Activated T-helper 1 cell treated with anti-CD3 and anti-CD28 coated beads, Interleukin-12 subunit alpha, Interleukin-12 subunit beta, Interleukin-2, Interleukin-4 antibody, amounts not matched to agents 30 ng/mL and 10 ng/mL and 1 ng/mL, durations not matched to agents 14 hours and 24 hours and 36 hours (primary cell): ENCODE measurements at regions of chr9 and their contacts with region 1.

Region 1: GRCh38 chr9:83920927-83921707 is at the start of gene KIF27:
- DNase-seq: peak; percentile 98
- H3K4me3 Mint-ChIP-seq: peak within 1 kb of the TSS; percentile 85
- H3K27ac Mint-ChIP-seq: peak within 1 kb of the TSS; percentile 91
- H3K4me1 Mint-ChIP-seq: peaks cover 17% of the 10 kb centered on the region
- H3K27me3 Mint-ChIP-seq: no peaks in the 10 kb centered on the region
- total RNA-seq, gene KIF27: 2.9 TPM in 2 replicates

Region 2: DNA sequence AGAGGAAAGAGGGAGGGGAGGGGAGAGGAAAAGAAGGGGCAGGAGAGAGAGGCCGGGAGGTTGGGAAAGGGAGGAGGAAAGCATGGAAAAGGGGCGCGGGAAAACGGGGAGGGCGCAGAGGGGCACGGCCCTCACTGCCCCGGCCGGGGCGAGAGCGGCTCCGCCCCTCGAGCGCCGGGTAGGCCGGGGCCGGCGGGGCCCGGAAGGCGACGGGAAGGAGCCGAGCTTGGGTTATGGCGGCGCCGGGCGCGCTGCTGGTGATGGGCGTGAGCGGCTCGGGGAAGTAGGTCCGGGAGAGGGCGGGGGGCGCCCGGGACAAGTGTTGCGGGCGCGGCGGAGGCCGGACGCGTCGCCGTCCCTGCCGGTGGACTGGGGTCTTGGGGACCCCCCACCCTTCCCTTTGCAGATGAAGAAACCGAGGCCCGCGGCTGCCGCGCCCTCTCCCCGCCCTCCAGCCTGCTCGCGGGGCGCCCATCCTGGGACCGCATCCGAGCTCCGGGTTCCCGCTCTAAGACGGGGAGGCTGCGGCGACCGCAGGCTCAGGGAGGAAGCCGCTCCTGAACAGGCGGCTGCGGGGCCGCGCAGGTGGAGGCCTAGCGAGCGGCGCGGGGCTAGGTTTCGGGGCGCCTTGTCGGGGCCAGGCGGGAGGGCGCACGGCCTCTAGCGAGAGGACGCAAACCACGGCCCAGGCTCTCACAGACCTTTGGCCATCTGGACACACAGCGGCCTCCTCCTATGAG is 298.0 kb before region 1 on chr9 and contains the start of gene IDNK:
- intact Hi-C with region 1: loop called (anchors 1 kb)
- DNase-seq: peak; percentile 60
- H3K4me3 Mint-ChIP-seq: peak within 1 kb of the TSS; percentile 91
- H3K27ac Mint-ChIP-seq: peak within 1 kb of the TSS; percentile 97
- H3K4me1 Mint-ChIP-seq: peaks cover 44% of the 10 kb centered on the region
- H3K27me3 Mint-ChIP-seq: peaks cover 10% of the 10 kb centered on the region
- total RNA-seq, gene IDNK: 4.5 and 6.3 TPM in 2 replicates

Region 3: GRCh38 chr9:83707768-83708514 is 213.2 kb before region 1 on chr9 and contains the start of gene UBQLN1:
- intact Hi-C with region 1: loop called (anchors 1 kb)
- DNase-seq: peak; percentile 89
- H3K4me3 Mint-ChIP-seq: peak within 1 kb of the TSS; percentile 87
- H3K27ac Mint-ChIP-seq: peak within 1 kb of the TSS; percentile 96
- H3K4me1 Mint-ChIP-seq: peaks cover 36% of the 10 kb centered on the region
- H3K27me3 Mint-ChIP-seq: no peaks in the 10 kb centered on the region
- total RNA-seq, gene UBQLN1: 142 and 143 TPM in 2 replicates

Region 4: GRCh38 chr9:83937911-83938323 is 16.8 kb after region 1 on chr9:
- intact Hi-C with region 1: loop called (anchors 1 kb)
- DNase-seq: peak; percentile 20
- H3K4me3 Mint-ChIP-seq: no peak overlapping the region
- H3K27ac Mint-ChIP-seq: no peak overlapping the region
- H3K4me1 Mint-ChIP-seq: peaks cover 5% of the 10 kb centered on the region
- H3K27me3 Mint-ChIP-seq: peaks cover 2% of the 10 kb centered on the region

Region 5: DNA sequence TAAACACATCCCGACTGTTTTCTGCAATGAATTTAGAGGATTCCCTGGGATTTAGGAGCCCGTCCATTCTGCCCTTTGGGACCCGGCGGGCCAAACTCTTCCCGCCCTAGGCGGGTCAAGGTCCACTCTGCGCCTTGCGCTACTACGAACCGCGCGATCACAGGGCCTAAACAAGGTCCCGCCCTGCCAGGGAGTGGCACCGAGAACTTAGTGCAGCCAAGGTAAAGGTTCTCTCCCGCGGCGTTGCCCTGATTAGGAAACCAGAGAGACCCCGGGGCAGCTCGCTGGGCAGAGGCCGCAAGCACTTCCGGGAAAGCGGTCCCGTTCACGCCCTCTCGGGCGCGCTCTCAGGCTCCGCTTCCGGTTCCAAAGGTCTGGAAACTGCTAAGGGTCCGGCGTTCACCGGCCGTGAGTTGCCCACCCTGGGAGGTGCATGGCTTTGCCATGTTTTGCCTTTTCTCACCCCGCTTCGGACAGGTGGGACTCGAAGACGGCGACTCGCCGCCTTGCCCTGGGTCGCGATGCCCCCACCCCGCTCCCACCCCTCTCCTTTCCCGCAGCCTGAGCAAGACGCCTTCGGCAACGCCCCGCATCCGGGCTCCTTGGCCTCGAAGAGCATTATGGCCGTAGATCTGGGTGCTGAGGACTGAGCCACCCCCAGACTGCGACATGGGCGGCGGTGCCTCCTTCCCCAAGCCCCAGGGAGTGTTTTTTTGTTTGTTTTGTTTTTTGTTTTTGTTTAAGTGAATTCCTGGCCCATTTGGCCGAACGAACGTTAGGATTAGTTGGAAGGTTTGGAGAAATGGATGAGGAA is 35.5 kb after region 1 on chr9:
- intact Hi-C with region 1: loop called (anchors 1 kb)
- DNase-seq: peak; percentile 64
- H3K4me3 Mint-ChIP-seq: peak overlapping the region; percentile 92
- H3K27ac Mint-ChIP-seq: peak overlapping the region; percentile 94
- H3K4me1 Mint-ChIP-seq: peaks cover 17% of the 10 kb centered on the region
- H3K27me3 Mint-ChIP-seq: no peaks in the 10 kb centered on the region

Region 6: GRCh38 chr9:84261082-84261746 is 340.1 kb after region 1 on chr9:
- intact Hi-C with region 1: loop called (anchors 5 kb)
- DNase-seq: peak; percentile 33
- H3K4me3 Mint-ChIP-seq: no peak overlapping the region
- H3K27ac Mint-ChIP-seq: no peak overlapping the region
- H3K4me1 Mint-ChIP-seq: peaks cover 21% of the 10 kb centered on the region
- H3K27me3 Mint-ChIP-seq: no peaks in the 10 kb centered on the region